Naive thymus-derived CD8-positive, alpha-beta T cell (primary cell): ENCODE measurements at regions of chr20 and their contacts with region 1.

Region 1: DNA sequence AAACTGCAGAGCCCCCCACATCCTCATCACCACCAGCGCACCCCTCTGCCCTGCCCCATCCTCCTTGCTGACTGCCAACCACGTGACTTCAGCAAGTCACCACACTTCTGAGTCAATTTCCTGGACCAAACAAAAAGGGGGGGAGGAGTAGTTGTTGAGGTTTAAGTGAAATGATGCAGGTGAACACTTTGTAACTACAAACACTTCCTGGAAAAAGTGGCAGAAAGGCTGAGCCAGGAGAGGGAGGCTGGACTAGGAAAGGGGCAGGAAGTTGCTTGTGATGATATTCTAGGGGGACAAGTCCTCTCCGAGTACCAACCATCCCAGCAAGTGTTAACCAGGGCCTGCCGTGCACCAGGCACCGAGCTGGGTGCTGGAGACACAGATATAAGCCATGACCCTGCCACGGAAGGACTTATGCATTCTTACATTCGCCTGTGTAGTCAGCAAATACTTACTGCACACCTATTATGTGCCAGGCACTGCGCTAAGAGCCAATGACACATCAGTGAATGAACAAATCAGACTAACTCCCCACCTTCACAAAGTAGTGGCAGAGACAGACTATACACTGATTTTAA is 67.3 kb downstream of the PREX1 start:
- DNase-seq: peak; percentile 50 to 91 (median 79)
- ATAC-seq: peak; percentile 75 to 84
- H3K4me3 Mint-ChIP-seq: peak overlapping the region; percentile 63 to 88 (median 82)
- H3K27ac Mint-ChIP-seq: peak overlapping the region; percentile 93 to 100 (median 96)
- H3K4me1 Mint-ChIP-seq: peaks cover 44 to 98% (median 88%) of the 10 kb centered on the region in 4 donors
- H3K27me3 Mint-ChIP-seq: no peaks in the 10 kb centered on the region

Region 2: DNA sequence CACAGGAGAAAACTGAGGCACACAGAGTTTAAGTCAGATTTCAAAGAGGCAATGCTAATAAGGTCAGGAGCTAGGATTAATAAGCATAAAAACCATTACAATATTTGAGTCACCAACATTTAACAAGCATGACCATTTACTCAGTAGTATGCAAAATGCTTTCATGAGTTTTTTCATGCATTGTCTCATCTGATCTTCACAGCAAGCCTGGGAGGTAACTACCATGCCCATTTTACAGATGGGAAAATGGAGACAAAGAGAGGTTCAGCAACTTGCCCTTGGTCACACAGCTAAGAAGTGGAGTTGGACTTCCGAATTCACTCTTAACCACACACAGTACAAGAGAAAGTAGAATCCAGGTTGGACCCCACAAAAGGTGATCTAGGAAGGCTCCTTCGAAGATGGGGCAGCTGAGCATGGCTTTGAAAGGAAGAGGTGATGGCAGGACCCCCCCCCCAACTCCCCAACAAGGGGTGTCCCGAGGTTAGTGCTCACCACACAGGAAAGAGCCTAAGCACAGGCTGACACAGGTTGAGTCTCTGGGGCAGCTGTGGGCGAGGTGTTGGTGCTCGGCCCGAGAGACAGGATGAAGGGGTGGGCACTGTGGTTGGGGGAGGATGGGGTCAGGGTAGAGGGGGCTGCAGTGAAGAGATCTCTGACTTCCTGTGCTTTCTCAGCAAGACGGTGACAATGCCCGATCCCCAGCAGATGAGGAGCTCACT is 41.5 kb before region 1 on chr20:
- POLR2A ChIA-PET with region 1: interaction called, 16 read pairs
- DNase-seq: peak in 6 of 10 donors; percentile 27 to 67 (median 40)
- ATAC-seq: peak; percentile 36 to 42
- H3K4me3 Mint-ChIP-seq: peak overlapping the region; percentile 44 to 85 (median 74)
- H3K27ac Mint-ChIP-seq: peak overlapping the region; percentile 79 to 99 (median 91)
- H3K4me1 Mint-ChIP-seq: peaks cover 59 to 100% (median 98%) of the 10 kb centered on the region in 4 donors
- H3K27me3 Mint-ChIP-seq: no peaks in the 10 kb centered on the region

Region 3: GRCh38 chr20:48772362-48773015 is 12.0 kb after region 1 on chr20:
- POLR2A ChIA-PET with region 1: interaction called, 13 read pairs
- DNase-seq: peak in 4 of 10 donors; percentile 23 to 32 (median 30)
- ATAC-seq: peak in 1 of 2 donors; percentile 2
- H3K4me3 Mint-ChIP-seq: peak overlapping the region in 9 of 10 donors; percentile 3 to 78 (median 69)
- H3K27ac Mint-ChIP-seq: peak overlapping the region; percentile 38 to 96 (median 90)
- H3K4me1 Mint-ChIP-seq: peaks cover 48 to 95% (median 89%) of the 10 kb centered on the region in 4 donors
- H3K27me3 Mint-ChIP-seq: no peaks in the 10 kb centered on the region

Region 4: DNA sequence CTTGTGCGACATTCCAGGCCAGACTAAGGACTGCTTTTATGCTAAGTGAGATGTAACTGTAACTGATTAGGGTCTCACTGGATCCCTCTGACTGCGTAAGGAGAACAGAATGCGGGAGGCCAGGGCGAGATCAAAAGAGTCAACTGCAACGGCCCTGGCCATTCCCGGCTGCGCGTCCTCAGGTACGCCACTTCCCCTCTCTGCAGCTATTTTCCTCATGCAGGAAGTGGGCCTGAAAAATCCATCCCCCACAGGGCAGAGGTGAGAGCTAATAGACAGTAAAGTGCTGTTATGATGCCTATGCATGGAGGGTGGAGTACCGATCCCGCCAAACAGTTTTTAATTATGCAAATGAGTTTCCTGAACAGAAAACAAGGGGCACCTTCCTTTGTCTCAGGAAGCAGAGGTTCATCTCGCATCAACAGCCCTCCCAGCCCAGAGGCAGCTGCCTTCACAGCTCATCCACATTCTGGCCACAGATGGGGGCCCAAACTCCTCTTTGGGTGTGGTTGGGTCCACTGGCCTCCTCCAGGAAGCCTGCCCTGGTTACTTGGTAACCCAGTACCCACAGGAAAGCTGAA is 58.0 kb after region 1 on chr20:
- POLR2A ChIA-PET with region 1: interaction called, 14 read pairs
- DNase-seq: peak in 9 of 10 donors; percentile 21 to 74 (median 39)
- ATAC-seq: peak; percentile 66 to 75
- H3K4me3 Mint-ChIP-seq: peak overlapping the region; percentile 60 to 97 (median 74)
- H3K27ac Mint-ChIP-seq: peak overlapping the region in 9 of 10 donors; percentile 87 to 98 (median 97)
- H3K4me1 Mint-ChIP-seq: peaks cover 0 to 88% (median 38%) of the 10 kb centered on the region in 4 donors
- H3K27me3 Mint-ChIP-seq: no peaks in the 10 kb centered on the region